ENCODE measurements at regions of chr9 and their contacts with region 1.

Region 1: GRCh38 chr9:134644725-134645606 is 3.4 kb downstream of the COL5A1 start:
- H3K4me3 ChIP-seq: no peak overlapping the region
- H3K27ac ChIP-seq: no peak overlapping the region
- H3K4me1 ChIP-seq: no peaks in the 10 kb centered on the region; the same call in 1 of the 2 replicates
- CTCF ChIP-seq: no peak

Region 2: DNA sequence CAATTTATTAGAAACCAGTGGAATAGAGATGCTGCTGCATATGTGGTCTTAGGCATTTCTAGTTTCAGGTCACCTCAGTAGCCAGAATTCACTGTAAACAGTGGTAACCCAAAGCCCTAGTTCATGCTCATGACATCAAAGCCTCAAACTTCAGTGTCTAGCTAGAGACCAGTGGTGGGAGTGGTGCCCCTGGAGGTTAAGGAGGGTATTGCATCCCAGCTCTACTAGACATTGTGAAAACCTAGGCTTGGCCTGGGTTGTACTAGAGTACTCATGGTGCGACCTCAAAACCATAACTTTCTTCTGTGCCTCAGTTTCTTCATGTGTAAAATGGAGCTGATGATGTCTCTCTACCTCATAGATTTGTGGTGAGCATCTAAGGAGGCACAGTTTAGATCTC is 15.4 kb after region 1 on chr9:
- CTCF ChIA-PET with region 1: interaction called, 17 read pairs
- POLR2A ChIA-PET with region 1: interaction called, 5 read pairs
- H3K4me3 ChIP-seq: no peak overlapping the region
- H3K27ac ChIP-seq: no peak overlapping the region
- H3K4me1 ChIP-seq: no peaks in the 10 kb centered on the region
- CTCF ChIP-seq: no peak

Measured in HEK293 (cell line).